ENCODE measurements at regions of chr19 and their contacts with region 1.

Region 1: GRCh38 chr19:52889932-52890331 is 7.5 kb downstream of the ZNF320 start:
- DNase-seq: no peak
- ATAC-seq: no peak
- H3K4me3 ChIP-seq: no peak overlapping the region
- H3K4me3 Mint-ChIP-seq: no peak overlapping the region
- H3K27ac ChIP-seq: no peak overlapping the region
- H3K27ac Mint-ChIP-seq: peak overlapping the region in 1 of 2 donors; percentile 9
- H3K4me1 ChIP-seq: no peaks in the 10 kb centered on the region
- H3K4me1 Mint-ChIP-seq: peaks cover 15 to 19% of the 10 kb centered on the region in 2 donors
- H3K27me3 ChIP-seq: no peaks in the 10 kb centered on the region
- H3K27me3 Mint-ChIP-seq: no peaks in the 10 kb centered on the region
- CTCF ChIP-seq: no peak

Region 2: DNA sequence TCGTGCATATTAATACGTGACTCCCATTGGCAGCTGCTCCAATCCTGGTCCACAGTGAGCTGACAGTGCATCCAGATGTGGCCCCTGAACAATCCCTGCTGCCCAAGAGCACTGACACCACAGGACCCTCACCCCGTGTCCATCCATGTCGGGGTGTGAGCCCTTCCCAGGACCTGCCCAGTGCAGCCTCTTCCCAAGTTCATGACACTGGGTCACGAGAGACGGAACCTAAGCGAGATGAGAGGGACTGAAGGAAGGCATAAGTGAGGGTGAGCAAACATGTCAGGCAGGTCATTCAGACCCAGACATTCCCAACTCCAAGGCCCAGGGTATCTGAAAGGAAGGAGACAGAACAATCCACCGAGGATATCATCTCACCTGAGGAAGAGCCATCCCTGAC is 36.1 kb before region 1 on chr19:
- intact Hi-C with region 1: no loop called
- DNase-seq: no peak
- ATAC-seq: no peak
- H3K4me3 ChIP-seq: no peak overlapping the region
- H3K4me3 Mint-ChIP-seq: no peak overlapping the region
- H3K27ac ChIP-seq: no peak overlapping the region
- H3K27ac Mint-ChIP-seq: no peak overlapping the region
- H3K4me1 ChIP-seq: peaks cover 18% of the 10 kb centered on the region
- H3K4me1 Mint-ChIP-seq: peaks cover 29 to 32% of the 10 kb centered on the region in 2 donors
- H3K27me3 ChIP-seq: no peaks in the 10 kb centered on the region
- H3K27me3 Mint-ChIP-seq: no peaks in the 10 kb centered on the region
- CTCF ChIP-seq: no peak

Region 3: DNA sequence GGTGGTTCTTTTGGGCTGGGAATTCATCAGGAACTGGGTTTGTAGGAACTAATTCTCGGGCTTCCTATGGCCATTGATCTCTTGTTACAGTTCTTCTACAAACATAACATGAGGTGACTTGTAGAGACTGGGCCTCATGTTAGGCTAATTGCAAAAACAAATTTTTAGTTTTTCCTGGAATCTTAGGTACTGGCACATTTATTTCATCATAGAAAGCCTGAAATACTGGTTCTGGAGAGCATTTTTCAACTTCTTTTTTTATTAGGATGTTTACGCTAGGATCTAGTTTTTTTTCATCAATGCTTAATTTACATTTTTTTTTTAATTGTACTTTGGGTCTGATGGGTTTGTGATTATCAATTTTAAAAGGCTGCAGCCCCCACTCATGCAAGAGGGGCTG is 10.5 kb after region 1 on chr19:
- intact Hi-C with region 1: no loop called
- DNase-seq: no peak
- ATAC-seq: no peak
- H3K4me3 ChIP-seq: no peak overlapping the region
- H3K4me3 Mint-ChIP-seq: no peak overlapping the region
- H3K27ac ChIP-seq: no peak overlapping the region
- H3K27ac Mint-ChIP-seq: no peak overlapping the region
- H3K4me1 ChIP-seq: peaks cover 18% of the 10 kb centered on the region
- H3K4me1 Mint-ChIP-seq: peaks cover 14 to 19% of the 10 kb centered on the region in 2 donors
- H3K27me3 ChIP-seq: no peaks in the 10 kb centered on the region
- H3K27me3 Mint-ChIP-seq: no peaks in the 10 kb centered on the region
- CTCF ChIP-seq: no peak

Region 4: GRCh38 chr19:52910648-52911047 is 20.7 kb after region 1 on chr19:
- intact Hi-C with region 1: loop called (anchors 1 kb)
- DNase-seq: no peak
- ATAC-seq: no peak
- H3K4me3 ChIP-seq: no peak overlapping the region
- H3K4me3 Mint-ChIP-seq: no peak overlapping the region
- H3K27ac ChIP-seq: no peak overlapping the region
- H3K27ac Mint-ChIP-seq: no peak overlapping the region
- H3K4me1 ChIP-seq: no peaks in the 10 kb centered on the region
- H3K4me1 Mint-ChIP-seq: no peaks in the 10 kb centered on the region
- H3K27me3 ChIP-seq: no peaks in the 10 kb centered on the region
- H3K27me3 Mint-ChIP-seq: no peaks in the 10 kb centered on the region
- CTCF ChIP-seq: no peak

Measured in natural killer cell (primary cell).